ENCODE measurements at regions of chr16 and their contacts with region 1.

Region 1: GRCh38 chr16:16007743-16008111 is 58.3 kb downstream of the ABCC1 start:
- DNase-seq: no peak
- ATAC-seq: no peak
- H3K4me3 ChIP-seq: no peak overlapping the region
- H3K27ac ChIP-seq: no peak overlapping the region
- H3K4me1 ChIP-seq: peaks cover 0 to 9% (median 0%) of the 10 kb centered on the region in 12 donors
- H3K27me3 ChIP-seq: no peaks in the 10 kb centered on the region
- CTCF ChIP-seq: no peak
- POLR2A ChIP-seq: no peak

Region 2: GRCh38 chr16:15874745-15875314 is 132.9 kb before region 1 on chr16:
- intact Hi-C with region 1: loop called in 1 of 10 experiments (anchors 5 kb)
- DNase-seq: peak in 4 of 5 donors; percentile 29 to 40 (median 36)
- ATAC-seq: peak in 3 of 4 donors; percentile 76 to 90 (median 77)
- H3K4me3 ChIP-seq: no peak overlapping the region
- H3K27ac ChIP-seq: peak overlapping the region in 4 of 12 donors; percentile 9 to 76 (median 19)
- H3K4me1 ChIP-seq: peaks cover 0 to 16% (median 3%) of the 10 kb centered on the region in 12 donors
- H3K27me3 ChIP-seq: no peaks in the 10 kb centered on the region
- CTCF ChIP-seq: peak; percentile 49 to 82 (median 70)
- POLR2A ChIP-seq: no peak

Region 3: GRCh38 chr16:15925631-15926030 is 82.1 kb before region 1 on chr16:
- intact Hi-C with region 1: no loop called
- DNase-seq: no peak
- ATAC-seq: no peak
- H3K4me3 ChIP-seq: no peak overlapping the region
- H3K27ac ChIP-seq: no peak overlapping the region
- H3K4me1 ChIP-seq: no peaks in the 10 kb centered on the region
- H3K27me3 ChIP-seq: no peaks in the 10 kb centered on the region
- CTCF ChIP-seq: no peak
- POLR2A ChIP-seq: no peak